Sigmoid colon (tissue), 7 donors: ENCODE measurements at regions of chr1 and their contacts with region 1.

Region 1: GRCh38 chr1:52702886-52703787 is 5.0 kb upstream of the COA7 start:
- DNase-seq: peak; percentile 97
- H3K4me3 ChIP-seq: peak overlapping the region; percentile 45 to 59 (median 58)
- H3K27ac ChIP-seq: peak overlapping the region; percentile 85 to 86 (median 86)
- H3K4me1 ChIP-seq: peaks cover 0 to 35% (median 24%) of the 10 kb centered on the region in 4 donors
- H3K27me3 ChIP-seq: no peaks in the 10 kb centered on the region
- CTCF ChIP-seq: no peak
- EP300 ChIP-seq: no peak
- POLR2A ChIP-seq: peak; percentile 11 to 36

Region 2: DNA sequence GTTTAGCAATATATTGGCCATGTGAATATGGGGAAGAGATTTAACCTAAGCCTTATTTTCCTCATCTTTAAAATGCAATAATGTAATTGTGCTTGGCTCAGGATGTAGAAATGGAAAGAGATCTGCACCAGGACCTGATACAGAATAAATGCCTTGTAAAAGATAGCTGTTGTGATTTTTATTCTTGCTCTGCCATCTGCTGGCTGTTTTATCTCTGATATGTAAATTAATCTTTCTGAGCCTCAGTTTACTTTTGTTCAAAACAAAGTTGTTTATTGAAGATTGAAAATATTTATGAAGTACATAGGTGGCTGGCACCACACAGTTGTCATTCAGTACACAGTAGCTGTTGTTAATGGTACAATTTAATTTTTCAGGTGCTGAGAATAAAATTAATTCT is 45.0 kb after region 1 on chr1:
- intact Hi-C with region 1: loop called (anchors 2 kb)
- DNase-seq: no peak
- H3K4me3 ChIP-seq: no peak overlapping the region
- H3K27ac ChIP-seq: no peak overlapping the region
- H3K4me1 ChIP-seq: peaks cover 0 to 87% (median 49%) of the 10 kb centered on the region in 4 donors
- H3K27me3 ChIP-seq: no peaks in the 10 kb centered on the region
- CTCF ChIP-seq: peak in 2 of 4 experiments; percentile 31 to 44
- EP300 ChIP-seq: no peak
- POLR2A ChIP-seq: no peak

Region 3: DNA sequence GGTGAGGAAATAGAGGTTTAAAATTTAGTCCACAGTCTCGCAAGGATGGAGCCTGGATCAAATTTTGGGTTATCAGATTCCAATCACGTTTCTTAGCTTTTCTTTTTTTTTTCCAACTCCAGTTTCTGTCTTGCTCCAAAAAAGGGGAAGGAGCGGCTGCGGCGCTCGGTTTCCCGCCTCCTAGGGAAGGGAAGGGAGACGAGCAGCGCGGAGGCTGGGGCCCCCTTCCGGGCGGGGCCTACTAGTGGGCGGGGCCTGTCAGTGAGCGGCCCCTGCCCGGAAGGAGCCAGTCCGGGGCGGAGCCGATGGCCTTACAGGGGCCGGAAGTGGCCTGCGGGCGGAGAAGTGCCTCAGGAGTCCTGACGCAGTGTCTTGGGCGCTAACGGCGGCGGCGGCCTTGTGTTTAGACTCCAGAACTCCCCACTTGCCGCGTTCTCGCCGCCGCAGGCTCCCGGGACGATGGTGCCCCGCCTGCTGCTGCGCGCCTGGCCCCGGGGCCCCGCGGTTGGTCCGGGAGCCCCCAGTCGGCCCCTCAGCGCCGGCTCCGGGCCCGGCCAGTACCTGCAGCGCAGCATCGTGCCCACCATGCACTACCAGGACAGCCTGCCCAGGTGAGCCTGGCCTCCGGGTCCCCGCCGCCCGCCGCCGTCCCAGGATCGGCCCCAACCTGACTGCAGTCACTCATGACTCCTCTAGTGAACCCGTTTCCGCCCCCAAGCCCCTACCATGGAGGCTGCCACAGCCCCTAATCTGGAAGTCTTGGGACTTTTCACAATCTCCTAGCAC is 493.5 kb after region 1 on chr1 and contains the start of gene CPT2:
- intact Hi-C with region 1: loop called (anchors 10 kb)
- DNase-seq: peak; percentile 98
- H3K4me3 ChIP-seq: peak within 1 kb of the TSS; percentile 89 to 100 (median 93)
- H3K27ac ChIP-seq: peak within 1 kb of the TSS; percentile 99 to 100 (median 100)
- H3K4me1 ChIP-seq: peaks cover 0 to 38% (median 31%) of the 10 kb centered on the region in 4 donors
- H3K27me3 ChIP-seq: no peaks in the 10 kb centered on the region
- CTCF ChIP-seq: no peak
- EP300 ChIP-seq: no peak
- POLR2A ChIP-seq: peak; percentile 89 to 96
- total RNA-seq, gene CPT2: 8.0 to 14.1 (median 11.5) TPM